Testis (tissue), 5 donors: ENCODE measurements at regions of chr22 and their contacts with region 1.

Region 1: DNA sequence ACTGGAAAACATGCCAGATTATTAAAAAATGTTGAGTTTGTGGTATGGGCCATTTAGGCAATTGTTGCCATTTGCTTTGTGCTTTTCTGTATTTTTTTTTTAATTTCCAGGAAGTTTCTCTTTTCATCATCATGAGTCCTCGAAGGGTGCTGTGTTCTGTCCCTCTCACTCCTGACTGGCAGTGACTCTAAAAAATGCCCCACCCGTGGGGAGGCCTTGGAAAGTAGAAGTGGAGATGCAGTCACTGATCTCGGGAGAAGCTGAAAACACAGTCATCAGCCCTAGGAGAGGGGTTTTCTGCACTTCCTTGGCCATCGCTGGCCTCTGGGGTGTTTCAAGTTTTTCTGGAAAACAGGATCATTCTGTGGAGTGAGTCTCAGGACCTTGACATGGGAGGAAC is 98.5 kb upstream of the GRK3 start:
- DNase-seq: no peak
- H3K4me3 ChIP-seq: no peak overlapping the region
- H3K27ac ChIP-seq: no peak overlapping the region
- H3K4me1 ChIP-seq: no peaks in the 10 kb centered on the region
- H3K27me3 ChIP-seq: no peaks in the 10 kb centered on the region
- CTCF ChIP-seq: no peak
- POLR2A ChIP-seq: no peak

Region 2: DNA sequence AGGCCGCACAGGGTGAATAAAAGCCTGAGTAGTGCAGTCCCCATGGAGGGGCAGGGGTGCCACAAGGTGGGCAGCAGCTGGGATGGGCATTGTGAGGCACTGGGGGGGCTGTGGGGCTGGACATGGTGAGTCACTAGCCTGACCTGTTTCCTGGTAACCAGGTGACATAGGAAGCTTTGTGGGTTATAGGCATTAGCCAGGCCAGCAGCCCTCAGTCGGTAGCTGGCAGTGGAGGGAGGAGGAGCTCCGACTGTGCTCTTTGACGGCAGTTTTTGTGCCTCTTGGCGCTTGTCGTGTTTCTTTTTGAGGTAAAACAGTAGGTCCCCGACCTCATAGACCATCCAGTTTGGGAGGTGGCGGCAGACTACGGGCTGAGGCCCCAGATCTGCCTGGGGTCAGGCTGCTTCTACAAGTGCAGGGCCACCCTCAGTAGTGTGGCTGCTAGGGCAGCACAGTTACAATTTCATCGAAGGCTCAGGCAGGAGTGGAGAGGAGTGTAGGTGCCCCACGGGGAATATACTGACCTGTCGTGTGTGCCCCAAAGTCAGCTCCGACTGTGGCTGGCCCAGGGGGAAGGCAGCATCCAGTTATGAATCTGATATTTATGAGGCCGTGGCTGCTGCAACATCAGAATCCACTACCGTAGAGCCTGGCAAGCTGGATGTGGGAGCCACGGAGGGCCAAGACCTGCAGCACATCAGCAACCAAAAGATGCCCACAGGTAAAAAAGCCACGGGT is 138.8 kb before region 1 on chr22:
- intact Hi-C with region 1: no loop called
- DNase-seq: no peak
- H3K4me3 ChIP-seq: no peak overlapping the region
- H3K27ac ChIP-seq: no peak overlapping the region
- H3K4me1 ChIP-seq: no peaks in the 10 kb centered on the region
- H3K27me3 ChIP-seq: no peaks in the 10 kb centered on the region
- CTCF ChIP-seq: no peak
- POLR2A ChIP-seq: no peak

Region 3: DNA sequence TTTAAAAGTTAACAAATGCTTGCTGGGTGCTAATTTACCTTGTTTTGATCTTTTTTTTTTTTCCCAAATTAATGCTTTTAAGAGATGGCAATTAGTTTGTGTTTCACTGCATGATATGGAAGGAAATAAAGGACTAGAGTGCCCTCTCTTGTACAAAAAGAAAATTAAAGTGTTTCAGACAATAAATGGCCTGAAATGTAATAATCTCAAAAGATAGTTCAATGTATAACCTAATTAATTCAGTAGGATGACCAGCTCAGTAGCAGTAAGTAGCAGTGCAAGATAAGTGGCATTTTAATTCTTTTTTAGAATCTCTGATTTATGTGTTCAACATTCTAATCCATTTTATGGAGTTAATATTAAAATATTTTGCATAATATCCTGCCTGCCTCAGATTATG is 236.1 kb after region 1 on chr22:
- intact Hi-C with region 1: loop called (anchors 10 kb)
- DNase-seq: no peak
- H3K4me3 ChIP-seq: no peak overlapping the region
- H3K27ac ChIP-seq: no peak overlapping the region
- H3K4me1 ChIP-seq: no peaks in the 10 kb centered on the region
- H3K27me3 ChIP-seq: no peaks in the 10 kb centered on the region
- CTCF ChIP-seq: peak in 1 of 3 experiments; percentile 31
- POLR2A ChIP-seq: no peak

Region 4: DNA sequence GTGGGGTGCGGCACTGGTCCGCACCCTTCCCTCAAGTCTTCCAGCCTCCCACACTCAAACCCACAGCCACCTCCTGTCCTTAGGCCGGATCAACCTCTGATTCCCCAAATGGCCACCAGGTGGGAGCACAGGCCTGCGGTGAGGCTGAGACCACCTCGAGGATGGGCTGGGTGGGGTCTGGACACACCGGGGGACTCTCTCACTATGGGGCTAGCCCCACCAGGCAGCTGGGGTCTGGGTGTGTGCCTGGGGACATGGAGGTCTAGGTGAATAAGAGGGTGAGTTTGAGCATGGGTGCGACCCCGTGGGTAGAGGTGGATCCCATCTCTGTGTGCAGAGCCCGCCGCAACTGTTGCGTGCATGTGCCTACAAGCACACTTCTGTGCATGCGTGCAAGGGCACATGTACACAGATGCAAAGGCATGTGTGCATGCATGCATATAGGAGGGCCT is 308.7 kb after region 1 on chr22:
- intact Hi-C with region 1: loop called (anchors 5 kb)
- DNase-seq: no peak
- H3K4me3 ChIP-seq: no peak overlapping the region
- H3K27ac ChIP-seq: no peak overlapping the region
- H3K4me1 ChIP-seq: no peaks in the 10 kb centered on the region
- H3K27me3 ChIP-seq: no peaks in the 10 kb centered on the region
- CTCF ChIP-seq: peak; percentile 23 to 54 (median 44)
- POLR2A ChIP-seq: no peak